ENCODE measurements at regions of chr15 and their contacts with region 1.

Region 1: DNA sequence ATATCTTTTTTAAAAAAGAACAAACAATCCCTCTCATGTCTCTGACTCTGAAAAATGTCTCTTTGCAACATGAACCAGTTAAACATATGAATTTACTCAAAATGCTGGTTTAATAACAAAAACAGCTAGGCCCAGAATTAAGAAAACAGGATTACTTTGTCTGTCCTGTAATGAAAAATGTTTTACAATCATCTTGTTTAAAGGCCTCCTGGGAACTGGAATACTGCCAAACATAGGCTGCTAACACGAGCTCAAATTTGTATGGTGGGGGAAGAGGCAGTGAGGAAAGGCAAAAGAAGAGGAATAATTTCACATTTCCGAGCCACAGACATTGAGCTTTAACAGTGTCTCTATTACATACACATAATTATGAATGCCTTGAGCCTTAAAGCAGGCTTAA is 61.7 kb upstream of the PPIB start:
- DNase-seq: no peak

Region 2: DNA sequence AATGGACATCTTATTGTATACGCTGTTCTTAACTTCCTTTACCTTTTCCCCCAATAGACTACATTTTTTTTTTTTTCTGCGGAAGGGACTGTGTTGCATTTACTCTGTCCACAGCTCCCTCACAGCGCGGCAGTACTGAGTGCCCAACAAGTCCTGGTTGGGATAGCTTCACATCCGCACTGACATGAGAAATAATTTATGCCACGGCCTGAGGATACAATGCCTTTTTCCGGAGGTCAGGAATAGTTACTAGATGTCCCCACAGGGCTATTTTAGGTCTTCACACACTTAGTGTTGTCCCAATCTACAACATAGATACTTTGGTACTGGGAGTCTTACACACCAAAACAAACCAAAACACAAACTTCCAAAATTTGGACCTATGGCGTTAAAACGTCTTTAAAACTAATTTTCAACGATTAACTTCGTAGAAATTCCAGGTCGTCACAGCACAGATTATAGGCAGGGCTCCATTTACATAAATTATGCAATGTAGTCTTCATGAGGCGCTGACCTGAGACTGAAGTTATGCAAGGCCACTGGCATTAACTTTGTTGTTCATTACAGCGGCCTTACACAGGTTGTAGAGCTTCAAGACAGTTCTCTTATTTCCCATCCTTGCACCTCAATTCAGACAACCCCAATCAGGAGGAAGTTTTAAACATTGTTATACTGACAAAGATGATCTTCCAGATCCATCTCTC is 60.7 kb before region 1 on chr15:
- intact Hi-C with region 1: no loop called
- DNase-seq: no peak

Region 3: DNA sequence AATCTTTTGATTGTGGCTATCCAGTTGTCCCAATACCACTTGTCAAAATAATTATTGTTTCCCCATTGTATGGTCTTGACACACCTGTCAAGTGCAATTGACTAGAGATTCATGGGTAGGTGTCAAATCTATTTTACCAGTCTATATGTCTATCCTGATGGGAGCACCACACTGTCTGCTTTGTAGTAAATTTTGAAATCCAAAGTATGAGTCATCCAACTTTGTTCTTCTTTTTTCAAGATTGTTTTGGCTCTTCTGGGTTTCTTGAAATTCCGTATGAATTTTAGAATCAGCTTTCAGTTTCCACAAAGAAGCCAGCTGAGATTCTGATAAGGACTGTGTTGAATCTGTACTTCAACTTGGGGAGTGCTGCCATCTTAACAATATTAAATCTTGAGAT is 59.5 kb after region 1 on chr15:
- intact Hi-C with region 1: loop called (anchors 10 kb)
- DNase-seq: no peak

Region 4: GRCh38 chr15:64369078-64369607 is 144.6 kb after region 1 on chr15:
- intact Hi-C with region 1: no loop called
- DNase-seq: no peak

Measured in cardiac septum (tissue), 1 donor.